HepG2 (cell line): ENCODE measurements at regions of chr21 and their contacts with region 1.

Region 1: GRCh38 chr21:34888569-34889319 is 160.4 kb downstream of the RUNX1 start:
- DNase-seq: peak; percentile 90
- ATAC-seq: peak; percentile 79
- H3K4me3 ChIP-seq: peak overlapping the region; percentile 86 to 96 (median 94)
- H3K27ac ChIP-seq: peak overlapping the region; percentile 87
- H3K4me1 ChIP-seq: peaks cover 16% of the 10 kb centered on the region
- H3K27me3 ChIP-seq: no peaks in the 10 kb centered on the region; a peak in 1 of 5 replicates
- CTCF ChIP-seq: no peak
- EP300 ChIP-seq: peak in 1 of 2 experiments; percentile 12; a peak in 1 of 4 replicates
- POLR2A ChIP-seq: peak in 1 of 2 experiments; percentile 97; a peak in 2 of 4 replicates
- RAD21 ChIP-seq: peak; percentile 37; the same call in 1 of the 2 replicates

Region 2: DNA sequence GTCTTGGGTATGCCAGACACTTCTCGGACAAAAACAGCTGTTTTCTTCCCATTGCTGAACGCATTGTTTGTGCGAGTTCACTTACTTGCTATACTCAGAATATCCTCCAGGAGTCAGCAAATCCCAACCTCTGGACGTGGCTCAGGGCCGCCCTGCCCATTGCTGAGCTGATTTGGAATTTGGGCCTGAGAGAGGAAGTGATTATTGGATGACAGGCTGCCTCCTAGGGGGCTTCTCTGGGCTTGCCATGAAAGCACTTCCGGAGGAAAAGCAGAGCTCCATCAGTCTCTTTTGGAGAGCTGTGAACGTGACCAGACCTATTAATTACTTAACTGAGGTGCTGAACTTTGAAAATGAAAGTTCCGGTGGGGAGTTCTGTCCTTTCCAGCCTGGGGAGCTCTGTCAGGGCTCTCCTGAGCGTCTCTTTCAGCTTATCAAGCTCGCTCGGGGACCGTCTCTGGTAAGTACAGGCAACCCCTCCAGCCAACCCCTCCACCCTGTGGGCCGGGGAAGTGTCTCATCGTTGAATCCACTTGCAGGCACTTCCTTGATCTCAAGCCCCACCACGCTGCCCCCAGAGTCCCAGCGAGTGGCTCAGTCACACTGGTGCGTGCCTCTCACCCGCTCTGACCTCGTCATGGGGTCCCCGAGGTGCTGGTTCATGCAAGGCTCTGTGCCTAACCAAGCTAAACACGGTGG is 143.0 kb before region 1 on chr21:
- CTCF ChIA-PET with region 1: no interaction called
- POLR2A ChIA-PET with region 1: interaction called, 88 read pairs
- in situ Hi-C with region 1: loop called (anchors 5 kb)
- intact Hi-C with region 1: loop called (anchors 1 kb)
- DNase-seq: peak; percentile 90
- ATAC-seq: peak; percentile 97
- H3K4me3 ChIP-seq: peak overlapping the region; percentile 49 to 72 (median 58)
- H3K27ac ChIP-seq: peak overlapping the region; percentile 43
- H3K4me1 ChIP-seq: peaks cover 44% of the 10 kb centered on the region
- H3K27me3 ChIP-seq: 0 out of 5 replicates have a peak, but pooled peaks cover 0 to 8% of the 10 kb centered on the region in 2 experiments
- CTCF ChIP-seq: peak; percentile 93
- EP300 ChIP-seq: no peak
- POLR2A ChIP-seq: no peak
- RAD21 ChIP-seq: peak; percentile 96

Region 3: DNA sequence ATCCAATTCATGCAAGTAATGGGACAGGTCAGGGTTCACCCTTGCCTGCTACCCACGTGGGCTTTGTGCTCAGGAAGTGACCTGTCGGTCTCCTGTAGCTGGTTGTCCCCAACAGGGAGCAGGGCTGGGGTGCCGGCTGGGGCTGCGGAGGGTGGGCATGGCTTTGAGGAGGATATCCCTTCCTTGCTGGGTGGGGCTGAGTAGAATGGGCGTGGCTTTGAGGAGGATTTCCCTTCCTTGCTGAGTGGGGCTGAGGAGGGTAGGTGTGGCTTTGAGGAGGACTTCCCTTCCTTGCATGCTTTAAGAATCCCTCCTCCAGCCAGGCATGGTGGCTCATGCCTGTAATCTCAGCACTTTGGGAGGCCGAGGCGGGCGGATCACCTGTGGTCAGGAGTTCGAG is 68.7 kb before region 1 on chr21:
- CTCF ChIA-PET with region 1: no interaction called
- POLR2A ChIA-PET with region 1: interaction called, 58 read pairs
- in situ Hi-C with region 1: no loop called
- intact Hi-C with region 1: loop called (anchors 5 kb)
- DNase-seq: no peak
- ATAC-seq: no peak
- H3K4me3 ChIP-seq: no peak overlapping the region
- H3K27ac ChIP-seq: peak overlapping the region; percentile 90
- H3K4me1 ChIP-seq: peaks cover 68% of the 10 kb centered on the region
- H3K27me3 ChIP-seq: no peaks in the 10 kb centered on the region
- CTCF ChIP-seq: no peak
- EP300 ChIP-seq: no peak
- POLR2A ChIP-seq: no peak
- RAD21 ChIP-seq: no peak

Region 4: DNA sequence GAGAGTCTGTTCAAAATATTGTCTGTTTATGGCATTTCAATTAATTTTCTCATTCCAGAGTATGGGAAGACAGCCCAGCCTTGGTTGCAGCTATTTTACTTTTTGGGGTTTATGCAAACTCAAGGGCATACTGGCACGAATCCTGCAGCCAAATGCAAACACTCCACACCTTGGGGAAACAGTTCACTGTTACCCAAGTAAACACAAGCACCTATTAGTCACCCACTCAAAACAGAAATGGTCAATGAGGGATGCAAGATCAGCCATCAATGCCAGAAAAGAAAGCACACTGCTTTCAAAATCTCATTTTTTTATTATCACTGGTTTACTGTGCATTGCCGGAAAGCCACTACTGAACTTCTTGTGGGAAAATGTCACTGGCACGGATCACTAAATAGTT is 10.2 kb before region 1 on chr21:
- CTCF ChIA-PET with region 1: no interaction called
- POLR2A ChIA-PET with region 1: interaction called, 10 read pairs
- in situ Hi-C with region 1: no loop called
- intact Hi-C with region 1: no loop called
- DNase-seq: peak; percentile 23
- ATAC-seq: no peak; the same call in 2 of the 3 replicates
- H3K4me3 ChIP-seq: no peak overlapping the region
- H3K27ac ChIP-seq: no peak overlapping the region
- H3K4me1 ChIP-seq: peaks cover 34% of the 10 kb centered on the region
- H3K27me3 ChIP-seq: no peaks in the 10 kb centered on the region
- CTCF ChIP-seq: no peak
- EP300 ChIP-seq: no peak
- POLR2A ChIP-seq: no peak
- RAD21 ChIP-seq: no peak

Region 5: DNA sequence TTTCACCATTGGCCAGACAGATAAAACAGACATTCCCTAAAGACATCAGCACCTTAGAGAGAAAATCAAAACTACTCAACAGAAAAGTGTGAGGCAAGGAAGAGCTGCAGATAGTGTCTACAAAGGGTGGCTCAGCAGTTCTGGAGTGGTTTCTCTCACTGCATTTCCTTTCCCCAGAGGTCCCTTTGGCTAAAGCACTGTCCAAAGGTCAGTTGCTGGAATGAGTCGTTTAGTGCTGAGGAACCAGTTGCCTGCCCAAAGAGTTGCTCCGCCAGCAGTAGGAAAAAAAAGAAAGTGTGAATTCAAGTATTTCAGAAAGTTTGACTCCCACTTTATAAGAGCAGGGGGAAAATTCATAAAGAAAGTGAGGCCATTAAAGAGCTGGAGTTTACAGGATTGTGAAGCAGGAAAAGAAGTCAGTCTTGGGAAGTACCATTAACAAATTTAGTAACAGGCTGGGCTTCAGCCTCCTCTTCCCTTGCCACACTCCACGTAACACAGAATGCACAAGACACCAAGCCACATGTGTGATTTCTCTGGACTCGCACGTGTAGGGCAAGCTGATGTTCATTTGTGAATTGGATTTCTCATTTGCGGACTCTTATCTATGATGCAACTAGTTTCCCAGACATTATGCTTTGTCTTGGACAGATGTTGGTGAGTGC is 38.2 kb after region 1 on chr21:
- CTCF ChIA-PET with region 1: no interaction called
- POLR2A ChIA-PET with region 1: no interaction called
- in situ Hi-C with region 1: no loop called
- intact Hi-C with region 1: no loop called
- DNase-seq: peak; percentile 72
- ATAC-seq: peak; percentile 97
- H3K4me3 ChIP-seq: peak overlapping the region in 1 of 3 experiments; percentile 9; a peak in 1 of 6 replicates
- H3K27ac ChIP-seq: no peak overlapping the region
- H3K4me1 ChIP-seq: peaks cover 28% of the 10 kb centered on the region
- H3K27me3 ChIP-seq: no peaks in the 10 kb centered on the region
- CTCF ChIP-seq: no peak
- EP300 ChIP-seq: 0 out of 4 replicates have a peak, but pooled peaks of 1 of the 2 experiments have one; percentile 3
- POLR2A ChIP-seq: no peak
- RAD21 ChIP-seq: no peak

Region 6: GRCh38 chr21:35043549-35043948 is 154.8 kb after region 1 on chr21:
- CTCF ChIA-PET with region 1: no interaction called
- POLR2A ChIA-PET with region 1: interaction called, 12 read pairs
- in situ Hi-C with region 1: no loop called
- intact Hi-C with region 1: no loop called
- DNase-seq: no peak
- ATAC-seq: no peak
- H3K4me3 ChIP-seq: no peak overlapping the region
- H3K27ac ChIP-seq: no peak overlapping the region
- H3K4me1 ChIP-seq: peaks cover 60% of the 10 kb centered on the region
- H3K27me3 ChIP-seq: no peaks in the 10 kb centered on the region
- CTCF ChIP-seq: no peak
- EP300 ChIP-seq: no peak
- POLR2A ChIP-seq: no peak
- RAD21 ChIP-seq: no peak

Region 7: DNA sequence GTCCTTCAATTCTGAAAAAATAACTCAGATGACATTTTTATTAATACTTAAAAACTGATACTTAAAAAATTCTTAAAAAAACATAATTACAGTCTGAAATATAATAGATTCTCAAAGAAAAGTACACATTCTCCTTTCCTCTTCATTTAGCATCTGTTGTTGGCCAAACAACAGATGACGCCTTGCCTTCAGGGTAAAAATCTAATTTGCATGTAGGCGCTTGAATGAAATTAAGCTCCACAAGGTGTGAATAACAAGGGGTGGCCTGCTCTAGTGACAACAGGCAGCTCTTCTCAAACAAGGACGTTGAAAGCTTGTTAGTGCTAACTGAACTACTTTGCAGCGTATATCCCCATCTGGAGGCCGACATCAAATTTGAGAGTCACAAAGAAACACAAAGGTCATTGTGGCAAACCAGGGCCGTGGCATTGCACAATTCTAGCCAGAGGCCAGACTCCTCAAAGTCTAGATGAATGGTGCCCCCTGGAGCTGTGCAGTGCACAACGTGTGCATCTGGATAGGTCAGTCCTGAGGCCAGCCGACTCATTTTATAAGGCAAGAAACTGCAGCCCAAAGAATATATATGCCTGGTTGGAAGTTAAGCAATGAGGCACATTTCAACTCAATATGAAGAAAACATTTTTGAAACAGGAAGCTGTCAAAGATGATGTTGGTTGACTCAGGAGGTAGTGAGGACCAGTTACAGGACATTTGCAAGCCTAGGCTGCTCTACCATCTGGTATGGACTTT is 619.6 kb after region 1 on chr21:
- CTCF ChIA-PET with region 1: no interaction called
- POLR2A ChIA-PET with region 1: no interaction called
- in situ Hi-C with region 1: no loop called
- intact Hi-C with region 1: loop called (anchors 10 kb)
- DNase-seq: peak; percentile 72
- ATAC-seq: peak; percentile 97
- H3K4me3 ChIP-seq: no peak overlapping the region
- H3K27ac ChIP-seq: no peak overlapping the region
- H3K4me1 ChIP-seq: peaks cover 7% of the 10 kb centered on the region; the same call in 1 of the 2 replicates
- H3K27me3 ChIP-seq: no peaks in the 10 kb centered on the region
- CTCF ChIP-seq: peak; percentile 75
- EP300 ChIP-seq: no peak
- POLR2A ChIP-seq: no peak
- RAD21 ChIP-seq: peak; percentile 59

Region 8: GRCh38 chr21:35940074-35940927 is 1051.6 kb after region 1 on chr21:
- CTCF ChIA-PET with region 1: no interaction called
- POLR2A ChIA-PET with region 1: no interaction called
- in situ Hi-C with region 1: loop called (anchors 25 kb)
- intact Hi-C with region 1: loop called (anchors 10 kb)
- DNase-seq: peak; percentile 45
- ATAC-seq: peak; percentile 96
- H3K4me3 ChIP-seq: no peak overlapping the region; a peak in 1 of 6 replicates
- H3K27ac ChIP-seq: no peak overlapping the region
- H3K4me1 ChIP-seq: peaks cover 9% of the 10 kb centered on the region; the same call in 1 of the 2 replicates
- H3K27me3 ChIP-seq: no peaks in the 10 kb centered on the region
- CTCF ChIP-seq: peak; percentile 88
- EP300 ChIP-seq: no peak
- POLR2A ChIP-seq: no peak
- RAD21 ChIP-seq: peak; percentile 47; the same call in 1 of the 2 replicates